A673 (cell line): ENCODE measurements at regions of chr11 and their contacts with region 1.

Region 1: GRCh38 chr11:102666331-102666957 is 39.1 kb downstream of the MMP27 start:
- DNase-seq: peak; percentile 79
- H3K4me3 ChIP-seq: no peak overlapping the region
- H3K27ac ChIP-seq: no peak overlapping the region
- H3K4me1 ChIP-seq: no peaks in the 10 kb centered on the region
- H3K27me3 ChIP-seq: no peaks in the 10 kb centered on the region
- CTCF ChIP-seq: peak; percentile 95

Region 2: DNA sequence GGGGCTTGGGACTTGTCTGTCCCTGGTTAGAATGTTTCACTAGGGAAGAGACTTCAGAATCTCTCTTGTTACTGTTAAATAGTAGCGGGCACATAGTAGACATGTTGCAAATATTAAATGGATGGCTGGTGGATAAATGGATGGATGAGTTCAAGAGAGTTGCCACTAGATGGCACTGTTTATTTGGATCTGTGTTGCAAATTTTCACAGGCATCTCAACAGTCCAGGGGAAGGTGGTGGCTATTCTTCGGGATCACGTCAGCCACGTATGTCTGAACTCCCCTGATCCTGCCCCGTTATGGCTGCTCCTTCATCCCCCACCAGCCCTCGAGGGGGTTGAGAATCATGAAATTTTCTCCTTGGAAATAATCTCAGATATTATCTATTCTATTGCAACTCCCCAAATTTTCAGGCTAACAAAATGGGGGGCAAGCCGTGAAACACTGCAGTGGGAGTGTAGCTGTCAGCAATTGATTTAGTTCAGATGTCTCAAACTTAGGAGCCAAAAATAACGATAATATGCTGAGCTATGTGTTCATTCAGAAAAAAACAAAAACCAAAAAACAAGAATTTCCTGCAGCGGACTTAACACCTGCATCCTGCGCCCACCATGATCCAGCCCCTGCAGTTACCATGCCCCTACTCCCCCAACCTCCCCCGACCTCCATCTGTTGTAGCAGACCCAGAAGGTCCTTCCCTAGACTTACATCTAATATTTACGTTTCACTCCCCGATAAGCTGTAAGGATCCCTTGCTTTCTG is 378.3 kb before region 1 on chr11:
- CTCF ChIA-PET with region 1: interaction called, 6 read pairs
- POLR2A ChIA-PET with region 1: no interaction called
- intact Hi-C with region 1: loop called (anchors 2 kb)
- DNase-seq: peak; percentile 89
- H3K4me3 ChIP-seq: peak overlapping the region; percentile 22
- H3K27ac ChIP-seq: no peak overlapping the region
- H3K4me1 ChIP-seq: peaks cover 19% of the 10 kb centered on the region
- H3K27me3 ChIP-seq: no peaks in the 10 kb centered on the region
- CTCF ChIP-seq: peak; percentile 90

Region 3: DNA sequence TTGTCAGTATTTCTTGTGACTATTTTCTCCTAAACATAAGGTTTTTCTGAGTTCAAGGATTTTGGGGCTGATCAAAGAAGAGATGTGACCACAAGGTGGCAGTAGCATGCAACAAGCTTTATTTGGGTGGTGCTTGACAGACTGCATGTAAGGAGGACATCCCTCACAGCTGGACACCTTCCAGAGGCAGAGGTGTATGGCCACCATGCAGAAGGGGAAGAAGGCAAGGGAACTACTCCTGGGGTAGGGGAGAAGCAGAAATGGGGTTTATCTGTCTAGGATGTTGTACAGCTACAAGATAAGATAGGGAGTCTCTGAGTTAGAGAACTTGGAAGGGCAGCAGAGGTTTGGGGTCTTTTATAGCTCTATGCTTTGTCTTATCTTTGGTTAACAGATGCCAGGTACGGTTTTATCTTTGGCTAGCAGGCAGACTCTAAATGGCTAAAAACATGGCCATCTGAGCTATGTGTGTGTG is 324.6 kb before region 1 on chr11:
- CTCF ChIA-PET with region 1: interaction called, 17 read pairs
- POLR2A ChIA-PET with region 1: no interaction called
- intact Hi-C with region 1: loop called (anchors 5 kb)
- DNase-seq: peak; percentile 91
- H3K4me3 ChIP-seq: no peak overlapping the region
- H3K27ac ChIP-seq: no peak overlapping the region
- H3K4me1 ChIP-seq: no peaks in the 10 kb centered on the region
- H3K27me3 ChIP-seq: no peaks in the 10 kb centered on the region
- CTCF ChIP-seq: peak; percentile 94

Region 4: DNA sequence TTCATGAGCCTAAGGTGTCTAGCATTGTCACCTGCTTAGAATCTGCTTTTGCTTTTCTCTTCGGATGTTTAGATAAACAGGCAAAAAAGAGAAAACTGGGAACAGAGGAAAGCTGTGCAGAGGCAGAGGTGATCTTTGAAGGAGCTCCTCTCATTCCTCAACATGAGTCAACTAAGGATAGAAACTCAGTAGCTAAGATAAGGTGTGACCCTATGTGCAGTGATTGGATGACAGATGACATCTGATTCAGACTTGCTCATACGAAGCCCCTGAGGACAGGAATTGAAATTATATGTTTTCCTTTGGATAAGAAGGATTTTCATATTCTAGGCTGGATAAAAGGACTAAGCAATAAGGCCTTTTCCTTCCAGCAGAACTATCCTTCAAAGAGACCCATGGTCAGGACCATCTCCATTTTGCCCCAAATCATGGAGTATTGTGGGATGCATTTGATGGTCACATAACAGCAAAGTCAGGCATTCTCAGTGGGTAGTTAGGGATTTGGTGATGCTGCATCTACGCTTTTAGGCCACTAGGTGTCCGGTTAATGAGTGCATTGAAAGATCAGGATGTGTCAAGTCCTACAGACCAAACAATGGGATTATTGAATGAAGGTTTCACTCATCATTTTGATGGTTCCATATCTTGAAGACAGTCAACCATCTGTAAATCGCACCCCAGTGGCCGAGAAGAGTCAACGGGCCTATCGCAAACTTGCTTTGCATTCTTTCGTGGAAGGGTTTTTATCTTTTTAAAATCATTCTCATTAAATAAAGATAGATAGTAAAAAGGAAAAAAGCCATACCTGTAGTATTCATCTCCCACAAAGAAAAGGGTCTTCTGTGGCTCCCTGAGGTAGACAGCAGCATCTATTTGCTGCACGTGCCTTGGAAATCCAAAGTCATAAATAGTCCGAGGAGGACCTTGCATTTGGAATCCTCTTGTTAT is 73.5 kb before region 1 on chr11:
- CTCF ChIA-PET with region 1: interaction called, 3 read pairs
- POLR2A ChIA-PET with region 1: no interaction called
- intact Hi-C with region 1: loop called (anchors 5 kb)
- DNase-seq: peak; percentile 64
- H3K4me3 ChIP-seq: no peak overlapping the region
- H3K27ac ChIP-seq: no peak overlapping the region
- H3K4me1 ChIP-seq: no peaks in the 10 kb centered on the region
- H3K27me3 ChIP-seq: no peaks in the 10 kb centered on the region
- CTCF ChIP-seq: peak; percentile 73